ENCODE measurements at regions of chr2 and their contacts with region 1.

Region 1: GRCh38 chr2:39737661-39738060 is 41.4 kb downstream of the THUMPD2 start:
- DNase-seq: peak; percentile 85 to 91
- ATAC-seq: peak; percentile 80
- H3K4me3 ChIP-seq: peak overlapping the region; percentile 40 to 74
- H3K27ac ChIP-seq: peak overlapping the region; percentile 69 to 98
- H3K4me1 ChIP-seq: peaks cover 6 to 10% of the 10 kb centered on the region in 2 donors
- H3K27me3 ChIP-seq: no peaks in the 10 kb centered on the region

Region 2: GRCh38 chr2:39696838-39697237 is 40.8 kb before region 1 on chr2:
- intact Hi-C with region 1: no loop called
- DNase-seq: no peak
- ATAC-seq: peak; percentile 60
- H3K4me3 ChIP-seq: no peak overlapping the region
- H3K27ac ChIP-seq: peak overlapping the region in 1 of 2 donors; percentile 30
- H3K4me1 ChIP-seq: no peaks in the 10 kb centered on the region
- H3K27me3 ChIP-seq: no peaks in the 10 kb centered on the region

Region 3: GRCh38 chr2:39778962-39779851 is 41.5 kb after region 1 on chr2 and contains the start of gene THUMPD2:
- intact Hi-C with region 1: loop called in 1 of 2 experiments (anchors 5 kb)
- DNase-seq: peak; percentile 84 to 92
- ATAC-seq: peak; percentile 91
- H3K4me3 ChIP-seq: peak within 1 kb of the TSS; percentile 68
- H3K27ac ChIP-seq: peak within 1 kb of the TSS; percentile 16 to 46
- H3K4me1 ChIP-seq: no peaks in the 10 kb centered on the region
- H3K27me3 ChIP-seq: no peaks in the 10 kb centered on the region
- total RNA-seq, gene THUMPD2: 14.8 to 19.7 TPM